Activated CD4-positive, alpha-beta memory T cell treated with anti-CD3 and anti-CD28 coated beads for 36 hours (primary cell): ENCODE measurements at regions of chr18 and their contacts with region 1.

Region 1: DNA sequence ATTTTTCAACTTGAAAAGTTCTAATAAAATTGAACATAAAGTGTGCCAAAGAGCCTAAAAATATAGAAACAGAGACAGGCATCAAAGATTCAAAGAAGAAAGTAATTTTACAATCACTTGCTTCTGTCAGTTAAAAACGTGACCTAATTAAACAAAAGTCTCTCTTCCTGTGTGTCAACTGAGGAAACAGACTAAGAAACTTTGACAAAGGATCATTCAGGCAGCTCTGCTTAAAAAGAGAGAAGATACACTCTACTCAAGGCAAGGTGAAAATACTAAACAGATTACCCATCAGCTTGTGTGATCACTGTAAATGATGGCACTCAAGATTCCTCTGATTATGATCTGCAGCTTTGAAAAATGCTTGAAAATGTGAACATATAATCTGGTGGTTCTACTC is 47.8 kb downstream of the DYM start:
- DNase-seq: no peak
- H3K4me3 Mint-ChIP-seq: no peak overlapping the region
- H3K27ac Mint-ChIP-seq: peak overlapping the region; percentile 77
- H3K4me1 Mint-ChIP-seq: peaks cover 29% of the 10 kb centered on the region
- H3K27me3 Mint-ChIP-seq: no peaks in the 10 kb centered on the region

Region 2: DNA sequence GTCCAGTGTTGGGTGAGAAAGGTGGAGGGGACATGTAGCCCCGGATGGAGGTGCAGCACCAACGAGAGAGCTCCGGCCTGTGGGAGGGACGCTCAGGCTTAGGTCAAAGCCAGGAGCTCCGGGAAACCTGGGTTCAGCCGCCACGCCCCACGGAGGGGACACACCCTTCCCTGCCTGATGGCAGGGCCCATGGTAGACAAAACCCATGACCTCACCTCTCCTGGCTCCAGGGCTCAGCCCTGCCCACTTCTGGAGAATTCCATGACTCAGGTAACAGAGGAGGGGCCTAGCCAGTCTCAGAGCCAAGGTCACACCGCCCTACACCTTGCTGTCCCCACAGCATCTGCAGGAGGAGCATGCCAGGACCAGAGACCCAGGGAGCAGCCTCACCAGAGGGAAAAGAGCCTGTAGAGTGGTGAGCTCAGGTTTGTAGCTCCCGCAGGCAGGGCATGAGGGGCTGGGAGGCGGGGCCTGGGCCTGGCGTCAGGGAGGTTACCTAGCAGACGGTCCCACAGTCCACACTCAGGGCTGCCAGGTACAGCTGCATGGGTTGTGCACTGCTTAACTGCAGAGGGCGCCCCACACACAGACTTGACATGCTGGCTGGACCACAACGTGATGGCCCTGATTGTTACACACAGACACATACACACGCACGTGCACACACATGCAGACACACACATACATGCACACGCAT is 391.1 kb before region 1 on chr18:
- CTCF ChIA-PET with region 1: interaction called, 3 read pairs
- POLR2A ChIA-PET with region 1: no interaction called
- intact Hi-C with region 1: loop called (anchors 2 kb)
- DNase-seq: peak; percentile 76
- H3K4me3 Mint-ChIP-seq: no peak overlapping the region
- H3K27ac Mint-ChIP-seq: no peak overlapping the region
- H3K4me1 Mint-ChIP-seq: no peaks in the 10 kb centered on the region
- H3K27me3 Mint-ChIP-seq: no peaks in the 10 kb centered on the region

Region 3: DNA sequence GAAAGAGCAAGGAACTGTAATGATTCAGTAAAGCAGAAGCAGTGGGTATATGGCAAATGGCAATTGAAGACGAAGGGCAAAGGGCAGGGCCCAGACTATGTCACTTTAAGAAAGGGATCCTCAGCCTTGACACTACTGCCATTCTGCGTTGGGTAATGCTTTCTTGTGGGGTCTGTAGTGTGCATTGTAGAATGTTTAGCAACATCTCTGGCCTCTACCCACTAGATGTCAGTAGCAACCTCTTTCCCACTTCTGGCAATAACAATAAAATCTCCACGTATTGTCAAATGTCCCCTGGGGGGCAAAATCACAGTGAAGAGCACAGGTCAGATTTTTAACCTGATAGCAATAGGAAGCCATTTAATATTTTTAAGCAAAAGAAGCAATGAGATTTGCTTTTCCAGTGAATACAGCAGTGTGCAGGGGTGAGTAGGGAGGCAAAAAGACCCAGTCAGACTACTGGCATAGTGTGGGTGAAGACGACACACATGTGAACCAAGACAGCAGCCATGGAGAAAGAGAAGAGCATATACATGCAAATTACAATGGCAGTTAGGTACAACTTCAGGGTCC is 161.8 kb before region 1 on chr18:
- CTCF ChIA-PET with region 1: no interaction called
- POLR2A ChIA-PET with region 1: no interaction called
- intact Hi-C with region 1: loop called (anchors 5 kb)
- DNase-seq: no peak
- H3K4me3 Mint-ChIP-seq: no peak overlapping the region
- H3K27ac Mint-ChIP-seq: no peak overlapping the region
- H3K4me1 Mint-ChIP-seq: no peaks in the 10 kb centered on the region
- H3K27me3 Mint-ChIP-seq: no peaks in the 10 kb centered on the region

Region 4: GRCh38 chr18:49399003-49399402 is 13.7 kb before region 1 on chr18:
- CTCF ChIA-PET with region 1: interaction called, 4 read pairs
- POLR2A ChIA-PET with region 1: no interaction called
- intact Hi-C with region 1: loop called (anchors 2 kb)
- DNase-seq: peak; percentile 15
- H3K4me3 Mint-ChIP-seq: no peak overlapping the region
- H3K27ac Mint-ChIP-seq: no peak overlapping the region
- H3K4me1 Mint-ChIP-seq: peaks cover 39% of the 10 kb centered on the region
- H3K27me3 Mint-ChIP-seq: no peaks in the 10 kb centered on the region